ENCODE measurements at regions of chr12 and their contacts with region 1.

Region 1: GRCh38 chr12:70049600-70050360 is 193.5 kb upstream of the CNOT2 start:
- DNase-seq: no peak
- H3K4me3 ChIP-seq: no peak overlapping the region
- H3K27ac ChIP-seq: no peak overlapping the region
- H3K4me1 ChIP-seq: no peaks in the 10 kb centered on the region
- H3K27me3 ChIP-seq: no peaks in the 10 kb centered on the region
- CTCF ChIP-seq: no peak

Region 2: DNA sequence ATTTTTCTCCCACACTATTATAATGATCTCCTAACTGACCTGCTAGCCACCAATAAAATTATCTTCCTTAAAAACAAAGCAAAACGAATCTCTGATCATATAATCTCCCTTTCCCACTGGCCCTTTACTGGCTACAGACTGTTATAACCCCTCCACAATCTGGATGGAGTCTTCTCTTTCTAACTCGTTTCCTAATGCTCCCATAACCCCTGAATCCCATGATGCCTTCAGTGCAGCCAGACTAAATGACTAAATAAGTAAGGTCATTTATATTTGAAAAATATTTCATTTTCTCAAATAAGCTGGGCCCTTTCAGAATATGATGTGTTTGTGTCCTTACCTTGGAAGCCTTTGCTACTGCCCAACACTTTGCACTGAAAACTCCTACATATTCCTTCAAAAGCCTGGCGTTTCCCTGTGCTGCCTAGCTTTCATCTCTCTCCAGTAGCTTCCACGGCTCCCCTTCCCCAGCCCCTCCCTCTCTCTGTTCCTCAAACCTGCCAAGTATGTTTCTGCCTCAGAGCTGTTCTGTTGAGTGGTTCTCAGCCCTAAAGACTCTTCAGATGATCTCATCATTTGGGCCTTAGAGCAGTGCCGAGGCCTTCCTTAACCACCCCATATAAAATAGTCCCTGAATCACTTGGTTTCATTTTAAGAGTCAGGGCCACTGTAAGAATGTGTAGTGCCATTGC is 133.1 kb before region 1 on chr12:
- intact Hi-C with region 1: loop called (anchors 5 kb)
- DNase-seq: no peak
- H3K4me3 ChIP-seq: no peak overlapping the region
- H3K27ac ChIP-seq: peak overlapping the region in 1 of 2 donors; percentile 27
- H3K4me1 ChIP-seq: no peaks in the 10 kb centered on the region
- H3K27me3 ChIP-seq: no peaks in the 10 kb centered on the region
- CTCF ChIP-seq: no peak

Region 3: GRCh38 chr12:70121557-70121956 is 71.8 kb after region 1 on chr12:
- intact Hi-C with region 1: no loop called
- DNase-seq: no peak
- H3K4me3 ChIP-seq: no peak overlapping the region
- H3K27ac ChIP-seq: no peak overlapping the region
- H3K4me1 ChIP-seq: no peaks in the 10 kb centered on the region
- H3K27me3 ChIP-seq: no peaks in the 10 kb centered on the region
- CTCF ChIP-seq: no peak

Region 4: DNA sequence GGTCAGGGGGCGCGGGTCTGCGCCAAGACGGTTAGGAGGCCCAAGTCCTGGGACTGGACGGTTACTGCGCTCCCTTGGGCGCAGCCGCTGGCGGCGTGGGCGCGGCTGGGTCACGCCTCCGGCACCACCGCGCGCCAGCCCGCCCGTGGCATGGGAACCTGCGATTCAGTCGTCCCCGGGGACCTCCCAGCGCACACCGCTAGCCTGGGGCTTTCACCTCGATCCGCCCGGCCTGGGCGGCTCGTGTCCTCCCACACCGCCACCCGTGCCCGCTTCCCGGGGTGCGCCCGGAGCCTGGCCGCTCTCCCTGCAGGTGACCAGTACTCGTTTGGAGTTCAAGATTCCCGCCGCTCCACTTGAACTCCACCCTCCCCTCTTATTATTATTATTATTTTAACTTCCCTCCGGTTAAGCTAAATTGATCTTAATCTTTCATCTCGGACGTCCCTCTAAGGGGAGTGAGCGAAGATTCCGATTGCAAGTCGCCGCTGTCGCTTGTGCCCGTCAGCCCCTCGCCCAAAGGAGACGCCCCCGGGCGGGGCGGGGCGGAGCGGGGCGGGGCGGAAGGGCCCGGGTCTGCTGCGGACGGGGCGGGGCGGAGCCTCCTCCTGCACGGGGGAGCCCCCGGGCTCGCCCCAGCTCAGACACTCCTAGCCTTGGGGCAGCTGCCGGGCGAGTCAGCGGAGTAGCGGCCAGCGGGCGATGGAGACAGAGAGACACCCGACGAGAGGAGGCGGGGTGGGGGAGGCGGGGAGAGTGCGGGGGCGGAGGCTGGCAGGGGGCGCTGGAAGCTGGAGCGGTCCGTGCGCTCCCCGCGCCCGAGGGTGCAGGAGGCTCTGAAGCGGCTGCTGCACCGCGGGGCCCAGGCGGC is 316.1 kb after region 1 on chr12 and contains the start of gene KCNMB4:
- intact Hi-C with region 1: loop called (anchors 10 kb)
- DNase-seq: peak in 1 of 2 donors; percentile 75
- H3K4me3 ChIP-seq: peak within 1 kb of the TSS; percentile 76 to 91
- H3K27ac ChIP-seq: peak within 1 kb of the TSS; percentile 27 to 33
- H3K4me1 ChIP-seq: peaks cover 3 to 6% of the 10 kb centered on the region in 2 donors
- H3K27me3 ChIP-seq: no peaks in the 10 kb centered on the region
- CTCF ChIP-seq: no peak
- total RNA-seq, gene KCNMB4: 3.4 TPM